H1 (cell line): ENCODE measurements at regions of chr17 and their contacts with region 1.

Region 1: GRCh38 chr17:30824356-30825145 is at the start of gene CRLF3:
- DNase-seq: peak; percentile 62 to 93
- H3K4me3 ChIP-seq: peak within 1 kb of the TSS; percentile 69 to 88 (median 82)
- H3K27ac ChIP-seq: peak within 1 kb of the TSS; percentile 77; the same call in 1 of the 2 replicates
- H3K4me1 ChIP-seq: peaks cover 0 to 3% (median 3%) of the 10 kb centered on the region in 4 experiments; a peak in 4 of 7 replicates
- H3K27me3 ChIP-seq: no peaks in the 10 kb centered on the region
- CTCF ChIP-seq: peak; percentile 29 to 41 (median 33)
- EP300 ChIP-seq: 0 out of 3 replicates have a peak, but pooled peaks of 1 of the 2 experiments have one; percentile 26
- POLR2A ChIP-seq: peak; percentile 84 to 90
- RAD21 ChIP-seq: peak; percentile 17 to 50; a peak in 3 of 4 replicates
- total RNA-seq, gene CRLF3: 21.0 and 22.7 TPM in 2 replicates

Region 2: DNA sequence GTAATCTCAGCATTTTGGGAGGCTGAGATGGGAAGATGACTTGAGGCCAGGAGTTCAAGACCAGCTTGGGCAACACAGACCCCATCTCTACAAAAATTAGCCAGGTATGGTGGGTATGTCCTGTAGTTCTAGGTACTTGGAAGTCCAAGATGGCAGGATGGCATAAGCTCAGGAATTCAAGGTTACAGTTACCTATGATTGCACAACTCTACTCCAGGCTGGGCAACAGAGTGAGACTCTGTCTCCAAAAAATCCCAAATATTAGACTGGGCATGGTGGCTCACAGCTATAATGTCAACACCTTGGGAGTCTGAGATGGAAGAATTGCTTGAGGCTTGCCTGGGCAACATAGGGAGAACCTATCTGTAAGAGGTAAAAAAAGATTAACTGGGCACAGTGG is 63.5 kb before region 1 on chr17:
- CTCF ChIA-PET with region 1: no interaction called
- POLR2A ChIA-PET with region 1: no interaction called
- DNase-seq: no peak
- H3K4me3 ChIP-seq: no peak overlapping the region
- H3K27ac ChIP-seq: no peak overlapping the region
- H3K4me1 ChIP-seq: no peaks in the 10 kb centered on the region
- H3K27me3 ChIP-seq: no peaks in the 10 kb centered on the region
- CTCF ChIP-seq: no peak
- EP300 ChIP-seq: no peak
- POLR2A ChIP-seq: no peak
- RAD21 ChIP-seq: no peak

Region 3: DNA sequence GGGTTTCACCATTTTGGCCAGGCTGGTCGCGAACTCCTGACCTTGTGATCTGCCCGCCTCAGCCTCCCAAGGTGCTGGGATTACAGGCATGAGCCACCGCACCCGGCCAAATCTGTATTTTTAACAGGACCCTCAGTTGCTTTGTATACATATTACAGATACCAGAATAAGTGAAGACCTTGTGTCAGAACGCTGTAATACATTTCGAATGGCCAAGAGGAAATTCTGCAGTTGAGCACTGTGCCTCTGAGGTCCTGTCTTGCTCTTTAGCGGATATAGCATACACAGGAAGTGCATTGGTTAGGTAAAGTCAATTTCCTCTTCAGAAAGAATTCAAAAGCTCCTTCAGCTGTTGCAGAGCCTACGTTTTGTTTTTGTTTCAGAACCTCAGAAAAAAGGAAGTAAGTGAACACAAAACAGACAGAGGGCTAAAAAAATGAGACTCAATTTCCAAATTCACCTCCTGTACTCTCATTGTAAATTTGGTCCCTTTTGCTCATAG is 15.7 kb before region 1 on chr17:
- CTCF ChIA-PET with region 1: interaction called, 4 read pairs
- POLR2A ChIA-PET with region 1: interaction called, 12 read pairs
- DNase-seq: no peak
- H3K4me3 ChIP-seq: no peak overlapping the region
- H3K27ac ChIP-seq: no peak overlapping the region
- H3K4me1 ChIP-seq: peaks cover 0 to 2% (median under 1%) of the 10 kb centered on the region in 4 experiments; a peak in 1 of 7 replicates
- H3K27me3 ChIP-seq: no peaks in the 10 kb centered on the region
- CTCF ChIP-seq: no peak
- EP300 ChIP-seq: no peak
- POLR2A ChIP-seq: no peak
- RAD21 ChIP-seq: no peak

Region 4: DNA sequence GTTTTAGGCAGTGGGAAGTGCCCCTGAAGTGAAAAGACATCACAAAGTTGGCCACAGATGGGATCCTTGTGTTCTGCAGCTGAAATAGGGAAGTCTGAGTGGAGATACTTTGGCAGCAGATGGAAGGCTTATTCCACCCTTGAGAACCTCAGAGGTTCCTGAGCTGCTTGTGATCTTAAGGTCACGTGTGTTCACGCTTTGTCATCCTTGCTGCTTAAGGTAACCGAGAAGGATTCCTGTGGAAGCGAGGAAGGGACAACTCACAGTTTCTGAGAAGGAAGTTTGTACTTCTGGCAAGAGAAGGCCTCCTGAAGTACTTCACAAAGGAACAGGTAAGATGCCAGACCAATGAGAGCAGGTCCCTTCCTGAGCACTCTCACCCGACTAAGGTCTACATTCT is 109.4 kb after region 1 on chr17:
- CTCF ChIA-PET with region 1: no interaction called
- POLR2A ChIA-PET with region 1: no interaction called
- DNase-seq: no peak
- H3K4me3 ChIP-seq: no peak overlapping the region
- H3K27ac ChIP-seq: no peak overlapping the region
- H3K4me1 ChIP-seq: no peaks in the 10 kb centered on the region
- H3K27me3 ChIP-seq: no peaks in the 10 kb centered on the region
- CTCF ChIP-seq: no peak
- EP300 ChIP-seq: no peak
- POLR2A ChIP-seq: no peak
- RAD21 ChIP-seq: no peak